GM10248 (cell line): ENCODE measurements at regions of chr13 and their contacts with region 1.

Region 1: GRCh38 chr13:107217251-107217650 is 649.3 kb upstream of the ARGLU1 start:
- DNase-seq: no peak
- CTCF ChIP-seq: no peak

Region 2: DNA sequence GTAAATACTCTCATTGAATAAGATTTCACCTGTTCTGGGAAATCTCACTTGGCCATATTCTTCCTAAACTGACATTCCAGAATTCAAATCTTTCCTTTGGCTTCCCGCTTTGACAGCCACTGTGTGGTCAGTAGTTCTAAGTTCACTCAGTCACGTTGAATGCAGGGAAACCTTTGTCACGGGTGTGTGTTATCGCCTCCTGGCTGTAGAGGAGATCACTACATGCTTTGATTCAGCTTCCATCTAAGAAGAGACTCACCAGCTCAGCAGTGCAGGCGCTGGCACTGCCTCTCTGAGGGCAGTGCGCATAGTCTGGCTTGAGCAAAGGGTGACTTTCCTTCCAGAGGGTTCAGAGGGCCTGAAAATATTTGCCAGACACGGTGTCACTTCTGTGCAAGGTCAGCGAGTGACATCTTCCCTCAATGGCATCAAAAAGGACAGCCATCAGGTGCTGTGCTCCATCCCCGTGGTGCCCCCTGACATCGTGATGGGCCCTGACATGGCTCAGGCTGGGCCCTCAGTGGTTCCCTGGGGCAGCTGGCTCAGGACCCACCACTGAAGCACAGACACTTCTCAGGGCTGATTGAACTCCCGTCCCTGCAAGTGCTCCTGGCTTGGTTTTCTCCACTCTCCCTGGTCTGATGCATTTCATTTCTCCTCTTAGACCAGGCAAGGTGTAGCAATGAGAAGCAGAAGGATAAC is 14.0 kb before region 1 on chr13:
- CTCF ChIA-PET with region 1: interaction called, 11 read pairs
- POLR2A ChIA-PET with region 1: no interaction called
- DNase-seq: peak; percentile 21
- CTCF ChIP-seq: peak; percentile 5

Region 3: GRCh38 chr13:107234319-107235073 is 17.2 kb after region 1 on chr13:
- CTCF ChIA-PET with region 1: no interaction called
- POLR2A ChIA-PET with region 1: no interaction called
- DNase-seq: no peak
- CTCF ChIP-seq: no peak

Region 4: GRCh38 chr13:107860284-107860683 is 643.0 kb after region 1 on chr13:
- CTCF ChIA-PET with region 1: no interaction called
- POLR2A ChIA-PET with region 1: no interaction called
- DNase-seq: no peak
- CTCF ChIP-seq: no peak